GM12878 (cell line): ENCODE measurements at regions of chr12 and their contacts with region 1.

Region 1: DNA sequence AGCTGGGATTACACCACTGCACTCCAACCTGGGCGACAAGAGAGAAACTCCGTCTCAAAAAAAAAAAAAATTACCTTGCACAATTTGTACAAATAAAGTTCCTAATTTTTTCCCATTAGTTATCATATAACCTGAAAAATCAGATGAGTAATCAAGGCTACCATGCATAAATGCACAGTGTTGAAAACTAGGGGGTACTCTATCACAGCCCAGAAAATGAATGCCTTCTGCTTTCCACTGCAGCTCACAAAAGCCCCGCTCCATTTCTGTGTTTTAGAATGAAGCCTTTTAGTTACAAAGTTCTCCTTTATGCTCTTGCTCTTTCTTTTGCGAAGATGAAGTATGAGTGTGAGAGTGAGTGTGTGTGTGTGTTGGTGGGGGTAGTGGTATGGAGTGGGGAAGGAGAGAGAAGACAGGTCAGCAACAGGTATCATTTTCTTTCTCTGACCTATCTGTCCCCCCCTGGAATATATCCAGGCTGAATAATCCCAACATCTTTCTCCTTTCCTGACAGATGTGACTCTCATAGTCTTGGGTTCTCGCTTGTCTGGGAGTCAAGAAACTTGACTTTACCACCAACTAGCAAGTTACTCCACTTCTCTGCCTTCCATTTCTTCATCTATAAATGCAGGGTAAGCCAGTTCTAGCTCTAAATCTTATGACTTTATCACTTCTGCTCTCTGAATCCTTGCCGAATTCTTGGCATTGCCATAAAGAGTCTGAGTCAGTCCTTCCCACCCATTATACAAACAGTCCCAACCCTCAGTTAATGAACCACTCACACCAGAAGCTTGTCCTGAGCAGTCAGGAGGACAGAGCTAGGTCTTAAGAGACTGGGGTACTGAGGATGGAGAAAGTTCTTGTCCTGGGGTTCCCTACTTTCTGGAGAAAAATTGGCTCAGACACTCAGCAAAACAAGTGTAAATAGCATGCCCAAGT is 16.1 kb downstream of the BIN2 start:
- DNase-seq: no peak
- ATAC-seq: no peak
- H3K4me3 ChIP-seq: no peak overlapping the region
- H3K27ac ChIP-seq: no peak overlapping the region
- H3K4me1 ChIP-seq: peaks cover 11% of the 10 kb centered on the region
- H3K27me3 ChIP-seq: no peaks in the 10 kb centered on the region
- CTCF ChIP-seq: no peak
- EP300 ChIP-seq: no peak
- POLR2A ChIP-seq: no peak
- RAD21 ChIP-seq: no peak

Region 2: DNA sequence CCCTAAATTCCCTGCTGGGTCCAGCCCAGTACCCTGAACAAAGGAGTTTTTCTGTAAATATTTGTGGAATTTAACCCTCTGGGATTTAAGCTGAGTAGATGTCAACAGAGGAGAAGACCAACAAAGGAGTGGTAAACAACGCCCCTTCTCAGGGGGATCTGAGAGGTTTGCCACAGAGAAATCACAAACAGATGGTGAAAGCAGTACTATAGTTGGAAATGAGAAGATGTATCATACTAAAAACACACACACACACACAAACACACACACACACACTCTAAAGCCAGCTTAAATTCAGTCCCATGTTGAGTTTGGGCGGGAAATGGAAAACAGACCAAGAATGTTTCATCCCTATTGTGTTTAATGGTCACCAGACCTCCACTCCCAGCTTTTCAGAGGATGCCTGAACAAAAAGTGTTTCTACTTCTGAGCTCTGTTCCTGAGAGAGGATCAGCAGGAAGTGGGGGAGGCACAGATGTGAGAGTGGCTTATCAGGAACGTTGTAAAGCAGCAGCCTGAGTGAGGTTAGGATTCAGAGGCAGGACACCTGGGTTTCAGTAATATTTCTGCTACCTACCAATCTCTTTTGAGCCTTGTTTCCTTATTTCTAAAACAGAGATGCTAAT is 12.9 kb after region 1 on chr12:
- CTCF ChIA-PET with region 1: interaction called, 4 read pairs
- POLR2A ChIA-PET with region 1: interaction called, 6 read pairs
- RAD21 ChIA-PET with region 1: interaction called, 3 read pairs
- SMC1A ChIA-PET with region 1: interaction called, 14 read pairs
- in situ Hi-C with region 1: no loop called
- intact Hi-C with region 1: no loop called
- DNase-seq: no peak
- ATAC-seq: no peak
- H3K4me3 ChIP-seq: peak overlapping the region; percentile 57; the same call in 1 of the 2 replicates
- H3K27ac ChIP-seq: peak overlapping the region; percentile 68
- H3K4me1 ChIP-seq: peaks cover 42% of the 10 kb centered on the region
- H3K27me3 ChIP-seq: no peaks in the 10 kb centered on the region
- CTCF ChIP-seq: no peak
- EP300 ChIP-seq: no peak
- POLR2A ChIP-seq: no peak
- RAD21 ChIP-seq: no peak